Activated B cell treated with CpG ODN at 0.5 μM for 24 hours (primary cell): ENCODE measurements at regions of chr15 and their contacts with region 1.

Region 1: GRCh38 chr15:40857601-40858341 is 13.9 kb downstream of the SPINT1 start:
- DNase-seq: peak; percentile 80
- ATAC-seq: peak; percentile 98
- H3K4me3 Mint-ChIP-seq: no peak overlapping the region
- H3K27ac Mint-ChIP-seq: no peak overlapping the region
- H3K4me1 Mint-ChIP-seq: peaks cover 8% of the 10 kb centered on the region
- H3K27me3 Mint-ChIP-seq: no peaks in the 10 kb centered on the region
- CTCF ChIP-seq: no peak

Region 2: GRCh38 chr15:40684381-40684780 is 173.4 kb before region 1 on chr15:
- CTCF ChIA-PET with region 1: no interaction called
- POLR2A ChIA-PET with region 1: no interaction called
- intact Hi-C with region 1: loop called (anchors 1 kb)
- DNase-seq: no peak
- ATAC-seq: no peak
- H3K4me3 Mint-ChIP-seq: no peak overlapping the region
- H3K27ac Mint-ChIP-seq: no peak overlapping the region
- H3K4me1 Mint-ChIP-seq: peaks cover 15% of the 10 kb centered on the region
- H3K27me3 Mint-ChIP-seq: no peaks in the 10 kb centered on the region
- CTCF ChIP-seq: no peak

Region 3: GRCh38 chr15:40743921-40744814 is 113.6 kb before region 1 on chr15:
- CTCF ChIA-PET with region 1: no interaction called
- POLR2A ChIA-PET with region 1: no interaction called
- intact Hi-C with region 1: no loop called
- DNase-seq: no peak
- ATAC-seq: no peak
- H3K4me3 Mint-ChIP-seq: no peak overlapping the region
- H3K27ac Mint-ChIP-seq: no peak overlapping the region
- H3K4me1 Mint-ChIP-seq: no peaks in the 10 kb centered on the region
- H3K27me3 Mint-ChIP-seq: no peaks in the 10 kb centered on the region
- CTCF ChIP-seq: no peak

Region 4: GRCh38 chr15:40847205-40847961 is 10.4 kb before region 1 on chr15:
- CTCF ChIA-PET with region 1: interaction called, 21 read pairs
- POLR2A ChIA-PET with region 1: interaction called, 7 read pairs
- intact Hi-C with region 1: no loop called
- DNase-seq: no peak
- ATAC-seq: peak; percentile 53
- H3K4me3 Mint-ChIP-seq: peak overlapping the region; percentile 38
- H3K27ac Mint-ChIP-seq: peak overlapping the region; percentile 64
- H3K4me1 Mint-ChIP-seq: peaks cover 39% of the 10 kb centered on the region
- H3K27me3 Mint-ChIP-seq: no peaks in the 10 kb centered on the region
- CTCF ChIP-seq: no peak

Region 5: DNA sequence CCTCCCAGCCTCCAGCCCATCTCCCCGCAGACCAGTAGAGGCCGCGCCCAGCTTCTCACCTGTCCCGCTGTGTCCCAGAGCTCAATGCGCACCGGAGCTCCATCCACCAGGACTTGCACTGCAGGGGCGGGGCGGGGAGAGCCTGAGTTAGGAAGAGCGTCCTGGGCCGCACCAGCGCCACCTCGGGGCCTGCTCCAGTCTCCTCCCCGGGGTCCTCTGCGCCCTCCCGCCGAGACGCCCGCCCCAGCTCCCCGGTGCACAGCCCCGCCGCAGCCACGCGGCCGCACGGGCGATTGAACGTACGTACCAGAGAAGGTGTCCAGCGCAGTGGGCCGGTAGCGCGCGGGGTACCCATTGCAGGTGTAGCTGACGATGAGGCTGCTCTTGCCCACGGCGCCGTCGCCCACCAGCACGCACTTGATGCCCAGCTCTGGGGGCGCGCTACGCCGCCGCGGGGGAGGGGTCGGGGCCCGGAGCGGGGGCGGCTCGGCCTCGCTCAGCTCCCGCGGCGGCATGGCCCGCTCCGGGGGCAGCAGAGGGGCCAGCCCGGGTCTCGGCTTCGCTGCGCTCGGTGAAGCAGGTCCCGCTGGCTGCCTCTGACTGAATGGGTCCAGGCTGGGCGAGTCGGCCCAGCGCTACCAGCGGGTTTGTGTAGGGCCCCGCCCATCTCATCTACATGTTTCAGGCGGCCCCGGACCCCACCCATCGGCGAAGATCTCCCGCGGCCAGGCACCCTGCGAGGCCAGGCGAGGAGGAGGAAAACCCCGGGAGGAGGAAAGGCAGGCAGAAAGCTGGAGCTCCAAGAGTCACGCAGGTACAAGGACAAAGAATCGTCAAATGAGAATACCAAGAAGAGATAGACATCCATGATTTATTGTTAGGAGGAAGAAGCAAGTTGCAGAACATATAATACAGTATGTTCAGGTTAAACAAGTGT is 16.1 kb after region 1 on chr15 and contains the start of gene RHOV:
- CTCF ChIA-PET with region 1: interaction called, 28 read pairs
- POLR2A ChIA-PET with region 1: interaction called, 11 read pairs
- intact Hi-C with region 1: loop called (anchors 1 kb)
- DNase-seq: peak; percentile 51
- ATAC-seq: peak; percentile 77
- H3K4me3 Mint-ChIP-seq: peak within 1 kb of the TSS; percentile 77
- H3K27ac Mint-ChIP-seq: no peak within 1 kb of the TSS
- H3K4me1 Mint-ChIP-seq: peaks cover 28% of the 10 kb centered on the region
- H3K27me3 Mint-ChIP-seq: peaks cover 2% of the 10 kb centered on the region
- CTCF ChIP-seq: no peak
- total RNA-seq, gene RHOV: 0.27 TPM in 1 of 2 replicates, not detected in the other

Region 6: GRCh38 chr15:40982855-40983254 is 125.1 kb after region 1 on chr15:
- CTCF ChIA-PET with region 1: no interaction called
- POLR2A ChIA-PET with region 1: no interaction called
- intact Hi-C with region 1: no loop called
- DNase-seq: no peak
- ATAC-seq: no peak
- H3K4me3 Mint-ChIP-seq: no peak overlapping the region
- H3K27ac Mint-ChIP-seq: no peak overlapping the region
- H3K4me1 Mint-ChIP-seq: no peaks in the 10 kb centered on the region
- H3K27me3 Mint-ChIP-seq: no peaks in the 10 kb centered on the region
- CTCF ChIP-seq: no peak

Region 7: GRCh38 chr15:41022487-41023090 is 164.8 kb after region 1 on chr15:
- CTCF ChIA-PET with region 1: interaction called, 15 read pairs
- POLR2A ChIA-PET with region 1: interaction called, 7 read pairs
- intact Hi-C with region 1: loop called (anchors 2 kb)
- DNase-seq: no peak
- ATAC-seq: peak; percentile 66
- H3K4me3 Mint-ChIP-seq: no peak overlapping the region
- H3K27ac Mint-ChIP-seq: no peak overlapping the region
- H3K4me1 Mint-ChIP-seq: no peaks in the 10 kb centered on the region
- H3K27me3 Mint-ChIP-seq: no peaks in the 10 kb centered on the region
- CTCF ChIP-seq: no peak

Region 8: DNA sequence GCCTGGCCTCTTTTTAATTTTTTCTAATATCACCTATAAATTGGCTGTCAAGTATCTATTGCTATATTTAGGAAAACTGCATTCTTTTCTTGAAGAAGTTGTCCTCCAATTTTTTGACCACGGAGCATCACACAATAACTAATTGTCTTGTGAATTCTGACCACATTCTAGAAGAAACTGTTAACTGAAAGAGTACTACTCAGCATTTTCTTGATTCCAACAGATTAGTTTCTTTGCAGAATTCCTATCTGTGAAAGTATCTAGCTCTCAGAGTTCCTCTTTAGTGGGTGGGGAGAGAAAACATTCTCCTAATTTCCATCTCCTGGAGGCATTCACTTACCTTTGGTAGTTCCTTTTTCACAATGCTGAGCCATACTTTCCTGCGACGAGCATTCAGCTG is 227.3 kb after region 1 on chr15:
- CTCF ChIA-PET with region 1: no interaction called
- POLR2A ChIA-PET with region 1: no interaction called
- intact Hi-C with region 1: no loop called
- DNase-seq: no peak
- ATAC-seq: no peak
- H3K4me3 Mint-ChIP-seq: no peak overlapping the region
- H3K27ac Mint-ChIP-seq: peak overlapping the region; percentile 7
- H3K4me1 Mint-ChIP-seq: peaks cover 29% of the 10 kb centered on the region
- H3K27me3 Mint-ChIP-seq: no peaks in the 10 kb centered on the region
- CTCF ChIP-seq: no peak

Region 9: GRCh38 chr15:41161336-41161735 is 303.6 kb after region 1 on chr15:
- CTCF ChIA-PET with region 1: no interaction called
- POLR2A ChIA-PET with region 1: no interaction called
- intact Hi-C with region 1: no loop called
- DNase-seq: no peak
- ATAC-seq: no peak
- H3K4me3 Mint-ChIP-seq: no peak overlapping the region
- H3K27ac Mint-ChIP-seq: no peak overlapping the region
- H3K4me1 Mint-ChIP-seq: no peaks in the 10 kb centered on the region
- H3K27me3 Mint-ChIP-seq: peaks cover 2% of the 10 kb centered on the region
- CTCF ChIP-seq: no peak

Region 10: GRCh38 chr15:41180206-41180789 is 322.5 kb after region 1 on chr15:
- CTCF ChIA-PET with region 1: interaction called, 40 read pairs
- POLR2A ChIA-PET with region 1: no interaction called
- intact Hi-C with region 1: loop called (anchors 1 kb)
- DNase-seq: no peak
- ATAC-seq: no peak
- H3K4me3 Mint-ChIP-seq: no peak overlapping the region
- H3K27ac Mint-ChIP-seq: no peak overlapping the region
- H3K4me1 Mint-ChIP-seq: peaks cover 4% of the 10 kb centered on the region
- H3K27me3 Mint-ChIP-seq: no peaks in the 10 kb centered on the region
- CTCF ChIP-seq: no peak